ENCODE measurements at regions of chr20 and their contacts with region 1.

Region 1: DNA sequence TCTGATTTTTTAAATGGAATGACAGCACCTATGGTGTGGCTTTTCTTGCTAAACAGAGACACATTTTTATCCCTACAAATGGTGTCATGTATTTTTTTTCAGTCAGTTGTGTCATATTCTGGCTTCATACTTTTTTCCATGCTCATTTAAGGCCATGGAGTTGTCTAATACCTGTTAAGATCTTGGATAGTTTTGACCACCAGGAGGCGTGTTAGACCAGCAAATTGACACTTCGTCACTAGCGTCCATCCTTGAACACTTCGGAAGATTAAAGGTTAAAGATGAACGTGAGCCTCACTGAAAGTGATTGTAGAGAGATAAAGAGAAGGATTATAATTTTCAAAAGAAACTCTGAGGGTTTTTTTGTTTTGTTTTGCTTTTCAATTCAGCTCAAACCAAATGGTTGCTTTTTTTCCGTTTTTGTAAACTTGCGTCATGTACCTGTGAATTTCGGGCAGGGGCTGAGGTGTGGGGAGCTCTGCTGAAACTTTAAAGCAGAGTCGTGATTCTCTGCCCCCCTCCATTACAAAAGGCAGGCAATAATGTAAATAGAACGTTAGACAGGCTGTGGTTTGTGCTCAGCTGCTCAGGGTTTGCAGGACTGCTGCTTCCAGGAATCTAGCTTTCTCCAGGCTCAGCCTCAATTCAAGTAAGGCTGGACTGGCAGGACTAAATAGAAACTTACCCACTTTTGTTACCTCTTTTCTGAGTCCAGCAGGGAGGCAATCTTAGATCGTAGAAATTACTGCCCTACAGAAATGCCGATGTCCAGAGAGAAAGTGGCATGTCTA is 245.1 kb downstream of the FOXA2 start:
- DNase-seq: peak in 3 of 10 donors; percentile 8 to 56 (median 16)
- H3K4me3 ChIP-seq: peak overlapping the region in 7 of 59 donors; percentile 12 to 44 (median 20)
- H3K27ac ChIP-seq: no peak overlapping the region
- H3K27me3 ChIP-seq: peaks cover 0 to 42% (median 17%) of the 10 kb centered on the region in 45 donors
- CTCF ChIP-seq: peak; percentile 50 to 88 (median 77)

Region 2: DNA sequence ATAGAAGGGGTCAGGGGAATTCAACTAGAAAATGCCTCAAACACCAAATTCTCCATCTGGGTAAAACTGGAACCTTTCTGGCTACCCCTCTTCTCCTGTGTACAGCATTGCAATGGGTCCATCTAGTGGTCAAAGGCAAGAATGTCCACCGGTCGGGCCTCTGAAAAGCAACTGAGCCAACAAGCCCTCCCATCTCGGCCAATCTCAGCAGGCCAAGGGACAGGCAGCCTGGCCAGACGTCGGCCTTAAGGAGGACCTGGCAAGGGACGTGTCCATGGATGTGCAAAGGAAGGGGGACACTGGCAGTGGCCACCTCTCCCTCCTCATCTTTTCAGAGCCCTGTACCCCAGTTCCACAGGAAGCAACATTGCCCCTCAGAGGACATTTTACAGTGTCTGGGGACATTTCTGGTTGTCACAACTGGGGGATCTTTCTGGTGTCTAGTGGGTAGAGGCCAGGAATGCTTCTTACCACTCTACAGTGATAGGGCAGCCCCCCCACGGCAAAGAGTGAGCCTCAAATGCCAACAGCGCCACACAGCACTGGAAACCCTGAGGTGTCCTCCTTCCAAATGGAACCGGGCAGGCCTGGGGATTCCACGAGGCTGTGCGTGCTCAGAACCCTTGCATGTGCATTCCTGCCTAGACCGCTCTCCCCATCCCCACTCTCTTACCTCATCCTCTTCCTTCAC is 344.9 kb after region 1 on chr20:
- intact Hi-C with region 1: loop called (anchors 2 to 5 kb)
- DNase-seq: peak; percentile 30 to 80 (median 64)
- H3K4me3 ChIP-seq: no peak overlapping the region
- H3K27ac ChIP-seq: no peak overlapping the region
- H3K27me3 ChIP-seq: peaks cover 0 to 4% (median 0%) of the 10 kb centered on the region in 45 donors
- CTCF ChIP-seq: peak; percentile 60 to 94 (median 85)

Region 3: DNA sequence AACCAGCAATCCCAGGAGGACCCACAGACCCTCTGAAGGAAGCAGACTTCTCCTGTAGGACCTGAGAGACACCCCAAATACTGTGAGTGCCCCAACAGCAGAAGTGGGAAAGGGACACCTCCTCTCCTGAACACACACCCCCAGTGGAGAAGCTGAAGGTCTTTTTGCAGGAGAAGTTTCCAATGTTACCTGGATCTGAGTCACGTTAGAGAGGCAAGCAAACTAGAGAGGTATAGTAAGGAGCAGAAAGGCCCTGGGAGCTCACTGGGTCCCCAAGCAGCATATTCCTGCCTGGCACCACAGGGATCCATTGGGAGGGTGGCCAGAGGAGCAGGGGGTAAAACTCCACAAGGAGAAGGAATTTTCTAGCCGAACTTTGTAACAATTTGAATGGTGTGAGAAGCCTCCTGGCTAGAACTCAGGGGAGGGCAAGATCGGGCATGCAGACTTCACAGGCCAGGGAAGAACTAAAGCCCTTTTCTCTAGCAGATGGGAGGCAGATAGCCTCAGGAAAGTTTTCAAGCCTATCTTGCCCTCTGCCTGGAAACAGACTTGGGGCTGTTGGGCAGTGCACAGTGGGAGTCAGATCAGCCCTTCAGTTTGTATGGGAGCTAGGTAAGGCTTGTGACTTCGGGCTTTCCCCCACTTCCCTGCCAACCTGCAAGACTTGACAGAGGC is 627.6 kb after region 1 on chr20:
- intact Hi-C with region 1: no loop called
- DNase-seq: no peak
- H3K4me3 ChIP-seq: no peak overlapping the region
- H3K27ac ChIP-seq: no peak overlapping the region
- H3K27me3 ChIP-seq: peaks cover 0 to 27% (median 4%) of the 10 kb centered on the region in 45 donors
- CTCF ChIP-seq: no peak

Region 4: GRCh38 chr20:23340524-23340923 is 1001.2 kb after region 1 on chr20:
- intact Hi-C with region 1: loop called in 1 of 2 experiments (anchors 5 kb)
- DNase-seq: peak; percentile 38 to 88 (median 71)
- H3K4me3 ChIP-seq: no peak overlapping the region
- H3K27ac ChIP-seq: no peak overlapping the region
- H3K27me3 ChIP-seq: no peaks in the 10 kb centered on the region
- CTCF ChIP-seq: peak in 55 of 56 donors; percentile 35 to 86 (median 69)

Measured in dorsolateral prefrontal cortex (tissue), 120 donors.